Activated CD4-positive, alpha-beta memory T cell treated with anti-CD3 and anti-CD28 coated beads for 36 hours (primary cell): ENCODE measurements at regions of chrX and their contacts with region 1.

Region 1: DNA sequence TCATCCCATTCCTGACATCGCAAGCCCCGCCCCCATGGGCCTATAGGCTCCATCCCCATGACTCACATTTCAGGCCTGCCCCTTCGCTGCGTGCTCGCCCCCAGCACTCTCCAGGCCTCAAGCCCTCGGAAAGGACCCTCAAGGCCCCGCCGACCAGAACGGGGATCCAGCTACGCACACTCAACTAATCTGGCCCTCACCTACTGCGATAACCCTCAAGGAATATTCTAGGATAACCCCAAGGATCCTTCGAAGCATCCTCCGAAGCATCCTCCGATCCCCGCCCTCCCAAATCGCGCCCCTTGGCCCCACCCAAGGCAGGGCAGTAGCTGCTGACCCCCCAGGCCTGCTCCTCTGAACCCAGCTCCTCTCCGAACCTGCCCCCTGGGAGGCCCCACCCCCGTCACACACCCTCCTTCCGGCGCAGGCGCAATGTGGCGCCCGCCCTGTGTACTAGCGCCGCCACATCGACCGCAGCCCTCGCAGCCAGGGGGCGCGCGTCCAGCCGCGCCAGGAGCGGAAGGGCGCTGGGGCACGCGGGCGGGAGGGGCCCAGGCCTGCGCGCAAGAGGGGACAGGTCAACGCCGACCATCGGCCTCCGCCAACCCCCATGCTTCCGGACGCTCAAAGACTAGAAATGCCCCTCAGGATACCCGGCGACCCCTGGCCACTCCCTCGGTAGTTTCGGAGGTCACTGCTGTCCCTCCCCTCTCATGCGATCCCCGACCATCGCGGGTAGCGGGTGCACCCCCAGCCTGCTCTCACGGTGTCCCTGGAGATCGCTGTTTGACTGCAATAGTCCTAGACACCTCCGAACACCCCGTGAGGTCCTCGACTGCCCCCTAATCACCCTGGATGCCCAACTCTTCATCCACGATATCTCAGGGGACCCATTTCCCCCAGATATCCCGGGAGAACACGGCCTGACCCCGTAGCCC is 6.4 kb upstream of the MAGIX start:
- DNase-seq: peak; percentile 89
- H3K4me3 Mint-ChIP-seq: peak overlapping the region; percentile 86
- H3K27ac Mint-ChIP-seq: peak overlapping the region; percentile 97
- H3K4me1 Mint-ChIP-seq: peaks cover 11% of the 10 kb centered on the region
- H3K27me3 Mint-ChIP-seq: no peaks in the 10 kb centered on the region

Region 2: DNA sequence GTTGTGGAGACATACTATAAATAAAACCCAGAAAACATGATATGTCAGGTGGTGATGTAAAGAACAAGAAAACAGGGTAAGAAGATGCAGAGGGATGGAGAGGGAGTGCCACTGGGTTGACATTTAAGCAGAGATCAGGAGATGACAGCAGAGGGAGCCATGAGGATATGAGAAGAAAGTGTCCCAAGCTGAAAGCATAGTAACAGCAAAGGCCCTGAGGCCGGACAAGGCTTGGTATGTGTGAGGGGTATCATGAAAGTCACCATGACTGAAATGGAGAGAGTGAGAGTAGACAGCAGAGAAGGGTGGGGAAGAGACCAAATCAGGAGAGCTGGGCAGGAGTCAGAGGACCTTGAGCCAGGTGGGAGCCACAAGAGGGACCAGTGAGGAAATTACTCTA is 36.1 kb before region 1 on chrX:
- CTCF ChIA-PET with region 1: interaction called, 3 read pairs
- POLR2A ChIA-PET with region 1: no interaction called
- intact Hi-C with region 1: loop called (anchors 5 kb)
- DNase-seq: no peak
- H3K4me3 Mint-ChIP-seq: no peak overlapping the region
- H3K27ac Mint-ChIP-seq: no peak overlapping the region
- H3K4me1 Mint-ChIP-seq: peaks cover 37% of the 10 kb centered on the region
- H3K27me3 Mint-ChIP-seq: no peaks in the 10 kb centered on the region